Heart left ventricle (tissue), 16 donors: ENCODE measurements at regions of chr20 and their contacts with region 1.

Region 1: DNA sequence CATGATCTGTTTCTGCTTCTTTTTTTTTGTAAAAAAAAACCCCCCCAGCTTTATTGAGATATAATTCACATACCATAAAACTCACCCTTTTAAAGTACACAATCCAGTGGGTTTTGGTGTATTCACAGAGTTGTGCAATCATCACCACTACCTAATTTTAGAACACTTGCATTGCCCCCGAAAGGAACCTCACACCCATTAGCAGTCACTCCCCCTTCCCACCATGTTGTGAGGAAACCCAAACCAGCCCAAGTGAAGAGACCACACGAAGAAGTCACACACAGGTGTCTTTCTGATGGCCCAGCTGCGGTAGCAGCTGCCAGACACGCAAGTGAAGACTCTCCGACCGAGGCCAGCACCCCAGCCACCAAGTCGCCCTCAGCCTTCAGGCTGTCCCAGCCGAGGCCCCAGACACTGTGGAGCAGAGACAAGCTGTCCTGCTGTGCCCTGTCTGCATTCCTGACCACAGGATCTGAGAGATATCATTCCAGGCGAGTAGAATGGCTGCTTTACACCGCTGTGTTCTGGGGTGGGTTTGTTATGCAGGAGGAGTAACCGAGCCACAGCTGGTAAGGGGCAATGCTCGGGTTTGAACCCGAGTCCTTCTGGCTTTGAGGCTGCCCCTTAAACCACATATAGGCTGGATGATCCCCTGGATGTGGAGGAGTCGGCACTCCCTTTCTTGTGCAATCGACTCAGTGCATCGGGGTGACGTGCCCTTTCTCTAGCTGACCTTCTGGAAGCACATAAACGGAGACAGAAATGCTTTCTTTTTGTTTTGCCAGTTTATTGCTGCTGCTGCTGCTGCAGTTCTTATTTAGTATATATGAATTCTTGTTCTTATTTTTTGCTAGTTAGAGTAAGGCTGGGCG is 59.1 kb upstream of the PTPN1 start:
- DNase-seq: peak in 2 of 5 donors; percentile 50 to 61
- ATAC-seq: peak; percentile 62 to 80 (median 66)
- H3K4me3 ChIP-seq: peak overlapping the region in 11 of 12 donors; percentile 1 to 44 (median 33)
- H3K27ac ChIP-seq: peak overlapping the region in 11 of 12 donors; percentile 9 to 75 (median 66)
- H3K4me1 ChIP-seq: peaks cover 0 to 46% (median 11%) of the 10 kb centered on the region in 12 donors
- H3K27me3 ChIP-seq: no peaks in the 10 kb centered on the region
- CTCF ChIP-seq: no peak
- POLR2A ChIP-seq: peak in 1 of 2 donors; percentile 29

Region 2: GRCh38 chr20:50267041-50267865 is 183.9 kb before region 1 on chr20:
- intact Hi-C with region 1: no loop called
- DNase-seq: peak in 1 of 5 donors; percentile 54
- ATAC-seq: peak; percentile 16 to 54 (median 32)
- H3K4me3 ChIP-seq: peak overlapping the region in 1 of 12 donors; percentile 41
- H3K27ac ChIP-seq: peak overlapping the region in 2 of 12 donors; percentile 7 to 94
- H3K4me1 ChIP-seq: peaks cover 0 to 73% (median 5%) of the 10 kb centered on the region in 12 donors
- H3K27me3 ChIP-seq: no peaks in the 10 kb centered on the region
- CTCF ChIP-seq: no peak
- POLR2A ChIP-seq: no peak

Region 3: GRCh38 chr20:50286609-50287008 is 164.5 kb before region 1 on chr20:
- intact Hi-C with region 1: loop called in 1 of 10 experiments (anchors 10 kb)
- DNase-seq: peak in 3 of 5 donors; percentile 57 to 76 (median 58)
- ATAC-seq: peak in 3 of 4 donors; percentile 31 to 76 (median 53)
- H3K4me3 ChIP-seq: peak overlapping the region in 6 of 12 donors; percentile 6 to 44 (median 24)
- H3K27ac ChIP-seq: peak overlapping the region; percentile 48 to 87 (median 78)
- H3K4me1 ChIP-seq: peaks cover 0 to 62% (median 22%) of the 10 kb centered on the region in 12 donors
- H3K27me3 ChIP-seq: no peaks in the 10 kb centered on the region
- CTCF ChIP-seq: no peak
- POLR2A ChIP-seq: no peak

Region 4: DNA sequence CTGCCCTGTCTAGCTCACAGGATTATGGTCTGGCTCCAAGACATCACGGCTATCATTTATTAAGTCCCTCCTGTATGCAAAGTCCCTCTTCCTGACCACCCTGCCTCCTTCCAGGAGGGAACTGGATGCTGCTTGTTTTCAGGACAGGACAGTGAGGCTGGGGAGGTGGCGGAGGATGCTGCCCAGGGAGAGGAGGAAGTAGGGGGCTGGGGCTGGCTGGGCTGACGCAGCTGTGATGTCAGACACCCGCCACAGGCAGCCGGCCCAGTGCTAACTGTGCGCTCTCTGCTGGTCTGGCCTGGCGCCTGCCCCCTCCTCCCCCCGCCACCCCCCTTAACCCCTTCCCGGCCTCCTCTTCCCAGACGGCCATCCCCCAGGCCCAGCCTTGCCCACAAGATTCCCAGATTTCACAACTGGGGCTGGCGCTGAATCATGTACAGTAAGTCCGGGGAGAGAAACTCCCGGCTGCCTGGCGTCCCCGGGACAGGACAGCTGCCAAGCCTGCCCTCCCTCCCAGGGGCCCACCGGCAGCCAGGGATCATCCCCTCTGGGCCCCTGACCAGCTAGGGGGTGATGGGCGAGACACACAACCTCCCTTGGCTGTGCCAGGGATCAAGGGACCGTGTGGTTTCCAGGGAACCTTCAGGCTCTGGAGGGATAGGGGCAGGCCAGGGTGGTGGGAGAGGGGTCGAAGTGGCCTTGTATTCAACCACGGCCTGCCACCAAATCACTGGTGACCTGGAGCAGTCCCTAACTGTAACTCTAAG is 142.4 kb before region 1 on chr20:
- intact Hi-C with region 1: loop called in 3 of 10 experiments (anchors 10 kb)
- DNase-seq: peak; percentile 91 to 97 (median 93)
- ATAC-seq: peak; percentile 61 to 92 (median 82)
- H3K4me3 ChIP-seq: peak overlapping the region in 9 of 12 donors; percentile 16 to 50 (median 35)
- H3K27ac ChIP-seq: peak overlapping the region; percentile 62 to 96 (median 91)
- H3K4me1 ChIP-seq: peaks cover 4 to 79% (median 50%) of the 10 kb centered on the region in 12 donors
- H3K27me3 ChIP-seq: no peaks in the 10 kb centered on the region
- CTCF ChIP-seq: peak in 7 of 12 donors; percentile 13 to 45 (median 32)
- POLR2A ChIP-seq: peak in 1 of 2 donors; percentile 40

Region 5: DNA sequence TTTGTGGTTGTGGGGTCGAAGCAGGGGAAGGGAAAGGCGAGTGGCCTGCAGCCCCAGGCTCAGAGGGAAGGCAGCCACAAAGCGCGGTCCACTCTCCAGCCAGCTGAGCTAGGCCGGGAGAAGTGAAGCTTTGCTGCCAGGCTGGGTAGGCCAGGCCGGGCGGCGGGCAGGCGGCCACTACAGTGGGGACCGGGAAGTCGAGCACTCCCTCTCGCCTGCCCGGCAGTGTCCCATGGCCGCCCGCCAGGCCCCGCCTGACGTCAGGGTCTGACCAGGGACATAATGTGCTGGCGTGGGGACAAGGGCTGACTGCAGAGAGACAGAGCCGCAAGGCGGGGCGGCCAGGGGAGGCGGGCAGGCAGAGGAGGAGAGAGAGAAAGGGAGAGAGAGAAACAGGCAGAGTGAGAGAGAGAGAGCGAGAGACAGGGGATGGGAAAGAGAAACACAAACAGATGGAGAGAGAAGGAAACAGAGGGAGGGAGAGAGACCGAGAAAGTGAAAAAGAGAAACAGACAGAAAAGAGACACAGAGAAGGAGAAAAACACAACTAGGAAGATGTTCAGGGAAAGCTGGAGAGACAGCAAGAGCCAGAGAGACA is 35.5 kb before region 1 on chr20:
- intact Hi-C with region 1: loop called in 4 of 10 experiments (anchors 2 to 5 kb)
- DNase-seq: peak; percentile 98 to 100 (median 99)
- ATAC-seq: peak; percentile 97 to 99 (median 98)
- H3K4me3 ChIP-seq: peak overlapping the region in 3 of 12 donors; percentile 18 to 28 (median 27)
- H3K27ac ChIP-seq: peak overlapping the region; percentile 88 to 99 (median 96)
- H3K4me1 ChIP-seq: peaks cover 15 to 43% (median 26%) of the 10 kb centered on the region in 12 donors
- H3K27me3 ChIP-seq: no peaks in the 10 kb centered on the region
- CTCF ChIP-seq: no peak
- POLR2A ChIP-seq: peak in 1 of 2 donors; percentile 81